Activated CD4-positive, alpha-beta memory T cell treated with anti-CD3 and anti-CD28 coated beads, Interleukin-2, amount 10 ng/mL, durations not matched to agents 7 days and 5 days (primary cell): ENCODE measurements at regions of chr3 and their contacts with region 1.

Region 1: DNA sequence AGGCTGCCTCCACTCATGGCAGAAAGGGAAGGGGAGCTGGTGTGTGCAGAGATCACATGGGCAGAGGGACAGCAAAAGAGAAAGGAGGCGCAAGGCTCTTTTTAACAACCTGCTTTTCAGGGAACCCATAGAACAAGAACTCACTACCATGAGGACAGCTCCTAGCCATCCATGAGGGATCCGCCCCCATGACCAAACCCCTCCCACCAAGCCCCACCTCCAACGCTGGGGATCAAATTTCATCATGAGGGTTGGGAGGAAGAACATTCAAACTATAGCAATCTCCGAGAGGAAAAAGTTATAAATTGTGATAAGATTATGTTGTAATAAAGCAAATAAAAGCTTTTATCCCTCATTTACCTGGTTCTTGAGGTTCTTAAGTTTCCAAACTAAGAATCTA is 84.7 kb upstream of the LMCD1 start:
- DNase-seq: no peak
- H3K4me3 Mint-ChIP-seq: no peak overlapping the region
- H3K27ac Mint-ChIP-seq: no peak overlapping the region
- H3K4me1 Mint-ChIP-seq: peaks cover 3% of the 10 kb centered on the region
- H3K27me3 Mint-ChIP-seq: no peaks in the 10 kb centered on the region

Region 2: GRCh38 chr3:8239718-8240695 is 177.0 kb before region 1 on chr3:
- CTCF ChIA-PET with region 1: interaction called, 24 read pairs
- POLR2A ChIA-PET with region 1: no interaction called
- DNase-seq: peak; percentile 24
- H3K4me3 Mint-ChIP-seq: no peak overlapping the region
- H3K27ac Mint-ChIP-seq: no peak overlapping the region
- H3K4me1 Mint-ChIP-seq: no peaks in the 10 kb centered on the region
- H3K27me3 Mint-ChIP-seq: no peaks in the 10 kb centered on the region

Region 3: GRCh38 chr3:8301728-8302462 is 115.1 kb before region 1 on chr3:
- CTCF ChIA-PET with region 1: interaction called, 29 read pairs
- POLR2A ChIA-PET with region 1: no interaction called
- DNase-seq: no peak
- H3K4me3 Mint-ChIP-seq: no peak overlapping the region
- H3K27ac Mint-ChIP-seq: no peak overlapping the region
- H3K4me1 Mint-ChIP-seq: no peaks in the 10 kb centered on the region
- H3K27me3 Mint-ChIP-seq: no peaks in the 10 kb centered on the region

Region 4: DNA sequence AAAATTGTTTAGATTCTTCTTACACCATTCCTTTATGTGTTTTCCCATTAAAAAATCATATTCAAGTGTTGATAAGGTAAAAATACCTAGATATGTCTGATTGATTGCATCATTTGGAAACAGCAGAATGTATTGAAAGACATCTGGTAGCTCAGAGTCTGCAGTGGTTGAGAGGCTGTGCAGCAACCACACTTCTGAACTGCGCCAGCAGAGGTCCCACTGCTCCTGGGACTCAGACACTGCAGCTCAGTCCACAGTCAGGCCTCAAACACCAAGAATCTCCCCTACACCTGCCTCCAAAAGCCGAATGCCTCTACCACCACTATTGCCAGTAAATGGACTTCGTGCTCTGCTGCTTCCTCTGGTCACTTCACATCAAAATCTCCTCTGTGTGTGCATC is 92.2 kb before region 1 on chr3:
- CTCF ChIA-PET with region 1: interaction called, 178 read pairs
- POLR2A ChIA-PET with region 1: interaction called, 9 read pairs
- DNase-seq: peak; percentile 66
- H3K4me3 Mint-ChIP-seq: no peak overlapping the region
- H3K27ac Mint-ChIP-seq: no peak overlapping the region
- H3K4me1 Mint-ChIP-seq: no peaks in the 10 kb centered on the region
- H3K27me3 Mint-ChIP-seq: peaks cover 1% of the 10 kb centered on the region